ENCODE measurements at regions of chr6 and their contacts with region 1.

Region 1: GRCh38 chr6:160137989-160138835 is 16.6 kb downstream of the SLC22A1 start:
- DNase-seq: peak; percentile 29 to 70 (median 61)
- ATAC-seq: peak; percentile 76
- H3K4me3 ChIP-seq: no peak overlapping the region
- H3K4me3 Mint-ChIP-seq: no peak overlapping the region
- H3K27ac ChIP-seq: no peak overlapping the region
- H3K27ac Mint-ChIP-seq: peak overlapping the region in 3 of 9 donors; percentile 9 to 65 (median 28)
- H3K4me1 ChIP-seq: peaks cover 0 to 4% of the 10 kb centered on the region in 2 donors
- H3K4me1 Mint-ChIP-seq: peaks cover 0 to 10% (median 9%) of the 10 kb centered on the region in 7 donors
- H3K27me3 ChIP-seq: no peaks in the 10 kb centered on the region
- H3K27me3 Mint-ChIP-seq: peaks cover 0 to 6% (median 0%) of the 10 kb centered on the region in 5 donors

Region 2: GRCh38 chr6:159790956-159791598 is 347.1 kb before region 1 on chr6:
- CTCF ChIA-PET with region 1: no interaction called
- POLR2A ChIA-PET with region 1: no interaction called
- intact Hi-C with region 1: no loop called
- DNase-seq: peak in 7 of 9 donors; percentile 3 to 35 (median 6)
- ATAC-seq: no peak
- H3K4me3 ChIP-seq: peak overlapping the region; percentile 98
- H3K4me3 Mint-ChIP-seq: peak overlapping the region; percentile 94 to 100 (median 99)
- H3K27ac ChIP-seq: peak overlapping the region; percentile 94
- H3K27ac Mint-ChIP-seq: peak overlapping the region; percentile 95 to 99 (median 98)
- H3K4me1 ChIP-seq: peaks cover 15 to 27% of the 10 kb centered on the region in 2 donors
- H3K4me1 Mint-ChIP-seq: peaks cover 44 to 75% (median 60%) of the 10 kb centered on the region in 7 donors
- H3K27me3 ChIP-seq: no peaks in the 10 kb centered on the region
- H3K27me3 Mint-ChIP-seq: peaks cover 0 to 3% (median 0%) of the 10 kb centered on the region in 5 donors

Region 3: DNA sequence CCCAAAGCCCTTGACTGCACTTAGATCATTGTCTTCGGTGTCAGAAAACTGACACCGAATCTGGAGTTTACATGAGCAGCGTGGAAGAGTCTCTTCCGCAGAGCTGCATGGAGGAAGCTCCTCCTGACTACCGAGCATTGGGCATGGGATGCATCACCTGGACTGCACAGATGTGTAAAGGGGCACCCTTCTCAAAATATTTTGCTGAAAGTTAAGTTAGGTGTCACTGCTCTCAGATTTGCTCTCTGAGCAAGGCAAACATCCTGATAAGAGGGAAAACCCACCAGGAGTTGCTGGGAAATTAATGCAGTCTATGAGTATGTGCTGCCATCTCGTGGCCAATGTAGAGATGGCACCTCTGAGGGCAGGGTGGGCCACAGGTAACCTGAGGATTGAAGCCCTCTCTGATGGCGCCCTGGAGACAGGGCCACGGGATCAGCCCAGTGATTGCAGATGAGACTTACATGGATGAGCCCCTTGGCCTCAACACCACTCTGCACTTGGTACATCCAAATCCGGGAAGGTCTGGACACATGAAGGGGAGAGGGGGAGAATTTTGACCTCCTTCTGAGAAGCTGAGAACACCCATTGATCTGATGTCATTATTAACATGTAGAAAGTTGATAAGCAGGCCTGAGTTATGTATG is 396.0 kb after region 1 on chr6:
- CTCF ChIA-PET with region 1: interaction called, 15 read pairs
- POLR2A ChIA-PET with region 1: no interaction called
- intact Hi-C with region 1: loop called in 1 of 2 experiments (anchors 1 kb)
- DNase-seq: peak; percentile 2 to 55 (median 37)
- ATAC-seq: peak; percentile 86
- H3K4me3 ChIP-seq: no peak overlapping the region
- H3K4me3 Mint-ChIP-seq: no peak overlapping the region
- H3K27ac ChIP-seq: no peak overlapping the region
- H3K27ac Mint-ChIP-seq: no peak overlapping the region
- H3K4me1 ChIP-seq: no peaks in the 10 kb centered on the region
- H3K4me1 Mint-ChIP-seq: no peaks in the 10 kb centered on the region
- H3K27me3 ChIP-seq: no peaks in the 10 kb centered on the region
- H3K27me3 Mint-ChIP-seq: peaks cover 0 to 18% (median 5%) of the 10 kb centered on the region in 5 donors

Region 4: GRCh38 chr6:160667639-160668481 is 529.6 kb after region 1 on chr6:
- CTCF ChIA-PET with region 1: no interaction called
- POLR2A ChIA-PET with region 1: no interaction called
- intact Hi-C with region 1: loop called in 1 of 2 experiments (anchors 5 kb)
- DNase-seq: peak in 5 of 9 donors; percentile 1 to 18 (median 4)
- ATAC-seq: no peak
- H3K4me3 ChIP-seq: no peak overlapping the region
- H3K4me3 Mint-ChIP-seq: no peak overlapping the region
- H3K27ac ChIP-seq: no peak overlapping the region
- H3K27ac Mint-ChIP-seq: no peak overlapping the region
- H3K4me1 ChIP-seq: no peaks in the 10 kb centered on the region
- H3K4me1 Mint-ChIP-seq: no peaks in the 10 kb centered on the region
- H3K27me3 ChIP-seq: no peaks in the 10 kb centered on the region
- H3K27me3 Mint-ChIP-seq: peaks cover 7 to 28% (median 16%) of the 10 kb centered on the region in 5 donors